SK-N-SH (cell line): ENCODE measurements at regions of chr1 and their contacts with region 1.

Region 1: GRCh38 chr1:206734499-206735142 is 36.0 kb upstream of the IL19 start:
- DNase-seq: peak; percentile 83
- H3K4me3 ChIP-seq: no peak overlapping the region; a peak in 1 of 4 replicates
- H3K27ac ChIP-seq: no peak overlapping the region
- H3K4me1 ChIP-seq: peaks cover 0 to 2% of the 10 kb centered on the region in 2 experiments; a peak in 1 of 4 replicates
- H3K27me3 ChIP-seq: no peaks in the 10 kb centered on the region
- CTCF ChIP-seq: peak; percentile 72
- EP300 ChIP-seq: no peak
- RAD21 ChIP-seq: peak; percentile 85

Region 2: DNA sequence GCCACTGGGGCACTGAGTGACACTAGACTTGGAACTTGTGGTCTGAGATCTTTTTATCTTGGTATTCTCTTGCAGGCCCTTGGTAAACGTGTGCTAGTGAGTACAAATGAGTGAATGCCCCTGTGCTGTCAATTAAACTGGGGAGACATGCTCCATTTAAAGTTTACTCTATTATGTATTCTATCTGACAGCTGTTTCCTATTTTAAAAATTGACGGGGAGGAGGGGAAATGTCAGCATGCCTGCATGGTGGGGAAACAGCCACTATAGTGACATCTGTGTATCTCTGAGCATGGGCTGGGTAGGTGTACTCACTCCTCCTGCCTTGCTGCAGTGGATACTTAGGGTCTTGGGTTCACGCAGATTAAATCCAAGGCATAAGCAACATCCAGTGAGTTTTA is 323.3 kb before region 1 on chr1:
- CTCF ChIA-PET with region 1: no interaction called
- POLR2A ChIA-PET with region 1: no interaction called
- DNase-seq: peak; percentile 57
- H3K4me3 ChIP-seq: no peak overlapping the region
- H3K27ac ChIP-seq: no peak overlapping the region
- H3K4me1 ChIP-seq: peaks cover 6 to 24% of the 10 kb centered on the region in 2 experiments; a peak in 2 of 4 replicates
- H3K27me3 ChIP-seq: no peaks in the 10 kb centered on the region
- CTCF ChIP-seq: no peak
- EP300 ChIP-seq: peak in 1 of 2 experiments; percentile 45; a peak in 2 of 4 replicates
- RAD21 ChIP-seq: no peak; the same call in 1 of the 2 replicates

Region 3: GRCh38 chr1:206744683-206745082 is 10.1 kb after region 1 on chr1:
- CTCF ChIA-PET with region 1: interaction called, 13 read pairs
- POLR2A ChIA-PET with region 1: no interaction called
- DNase-seq: no peak
- H3K4me3 ChIP-seq: no peak overlapping the region
- H3K27ac ChIP-seq: no peak overlapping the region
- H3K4me1 ChIP-seq: no peaks in the 10 kb centered on the region
- H3K27me3 ChIP-seq: no peaks in the 10 kb centered on the region
- CTCF ChIP-seq: no peak
- EP300 ChIP-seq: no peak
- RAD21 ChIP-seq: no peak

Region 4: DNA sequence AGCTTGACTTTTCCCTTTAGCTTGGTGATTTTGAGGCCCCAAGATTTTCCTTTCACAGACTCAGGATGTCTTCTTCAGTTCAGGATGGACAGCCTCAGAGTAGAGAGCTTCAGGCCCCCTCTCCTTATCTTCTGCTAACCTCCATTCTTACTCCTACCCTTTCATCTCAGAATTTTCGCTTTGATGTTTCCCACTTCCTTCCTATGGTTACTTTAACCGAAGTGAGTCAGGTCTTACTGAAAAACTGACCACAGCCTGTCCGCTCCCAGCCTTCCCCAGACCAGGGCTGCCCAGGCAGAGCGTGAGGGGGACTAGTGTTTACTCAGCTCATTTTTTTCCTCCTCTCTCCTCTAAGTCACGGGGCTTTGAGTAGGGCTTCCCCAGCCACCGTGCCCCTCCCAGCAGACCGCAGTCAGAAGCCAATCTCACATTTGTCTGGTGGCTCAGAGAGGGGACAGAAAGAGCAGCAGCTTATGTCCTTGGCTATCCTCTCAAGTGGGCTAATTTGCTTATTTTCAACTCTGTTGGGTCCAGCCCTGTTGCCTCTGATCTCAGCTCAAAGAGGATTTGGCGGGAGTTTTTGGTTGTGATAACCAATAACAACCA is 31.7 kb after region 1 on chr1:
- CTCF ChIA-PET with region 1: interaction called, 10 read pairs
- POLR2A ChIA-PET with region 1: no interaction called
- DNase-seq: no peak
- H3K4me3 ChIP-seq: no peak overlapping the region
- H3K27ac ChIP-seq: no peak overlapping the region
- H3K4me1 ChIP-seq: peaks cover 0 to under 1% of the 10 kb centered on the region in 2 experiments; a peak in 2 of 4 replicates
- H3K27me3 ChIP-seq: peaks cover 10% of the 10 kb centered on the region; the same call in 1 of the 2 replicates
- CTCF ChIP-seq: no peak
- EP300 ChIP-seq: no peak
- RAD21 ChIP-seq: no peak

Region 5: DNA sequence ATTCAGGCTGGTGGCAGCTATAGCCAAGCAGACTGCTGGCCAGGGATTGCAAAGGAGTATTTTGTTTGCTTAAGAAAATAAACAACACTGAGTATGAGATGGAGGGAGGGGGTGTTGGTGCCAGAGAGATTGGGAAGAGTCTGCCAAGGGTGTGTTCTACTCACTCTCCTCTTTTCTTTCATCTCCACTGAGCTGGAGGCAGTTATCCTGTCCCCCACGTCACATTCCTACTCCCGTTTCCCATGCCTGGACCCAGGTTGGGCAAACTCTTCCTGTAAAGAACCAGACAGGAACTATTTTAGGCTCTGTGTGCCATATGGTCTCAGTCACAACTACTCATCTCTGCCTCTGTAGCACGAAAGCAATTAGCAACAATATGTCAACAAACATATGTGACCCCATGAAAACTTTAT is 161.2 kb after region 1 on chr1:
- CTCF ChIA-PET with region 1: interaction called, 32 read pairs
- POLR2A ChIA-PET with region 1: no interaction called
- DNase-seq: no peak
- H3K4me3 ChIP-seq: no peak overlapping the region
- H3K27ac ChIP-seq: no peak overlapping the region
- H3K4me1 ChIP-seq: no peaks in the 10 kb centered on the region
- H3K27me3 ChIP-seq: no peaks in the 10 kb centered on the region
- CTCF ChIP-seq: no peak
- EP300 ChIP-seq: no peak
- RAD21 ChIP-seq: no peak

Region 6: GRCh38 chr1:206935491-206936067 is 201.0 kb after region 1 on chr1:
- CTCF ChIA-PET with region 1: interaction called, 13 read pairs
- POLR2A ChIA-PET with region 1: no interaction called
- DNase-seq: peak; percentile 59
- H3K4me3 ChIP-seq: no peak overlapping the region
- H3K27ac ChIP-seq: no peak overlapping the region
- H3K4me1 ChIP-seq: no peaks in the 10 kb centered on the region
- H3K27me3 ChIP-seq: peaks cover 4% of the 10 kb centered on the region; the same call in 1 of the 2 replicates
- CTCF ChIP-seq: peak; percentile 40
- EP300 ChIP-seq: no peak
- RAD21 ChIP-seq: no peak

Region 7: GRCh38 chr1:207404849-207405525 is 670.4 kb after region 1 on chr1:
- CTCF ChIA-PET with region 1: no interaction called
- POLR2A ChIA-PET with region 1: no interaction called
- DNase-seq: peak; percentile 52
- H3K4me3 ChIP-seq: no peak overlapping the region; a peak in 1 of 4 replicates
- H3K27ac ChIP-seq: no peak overlapping the region
- H3K4me1 ChIP-seq: no peaks in the 10 kb centered on the region
- H3K27me3 ChIP-seq: peaks cover 32% of the 10 kb centered on the region; the same call in 1 of the 2 replicates
- CTCF ChIP-seq: peak; percentile 93
- EP300 ChIP-seq: no peak
- RAD21 ChIP-seq: peak; percentile 76